ENCODE measurements at regions of chr6 and their contacts with region 1.

Region 1: GRCh38 chr6:45930420-45931040 is 85.1 kb downstream of the CLIC5 start:
- DNase-seq: peak; percentile 67
- ATAC-seq: peak; percentile 66
- H3K4me3 Mint-ChIP-seq: no peak overlapping the region
- H3K27ac Mint-ChIP-seq: no peak overlapping the region
- H3K4me1 Mint-ChIP-seq: peaks cover 22% of the 10 kb centered on the region
- H3K27me3 Mint-ChIP-seq: no peaks in the 10 kb centered on the region

Region 2: DNA sequence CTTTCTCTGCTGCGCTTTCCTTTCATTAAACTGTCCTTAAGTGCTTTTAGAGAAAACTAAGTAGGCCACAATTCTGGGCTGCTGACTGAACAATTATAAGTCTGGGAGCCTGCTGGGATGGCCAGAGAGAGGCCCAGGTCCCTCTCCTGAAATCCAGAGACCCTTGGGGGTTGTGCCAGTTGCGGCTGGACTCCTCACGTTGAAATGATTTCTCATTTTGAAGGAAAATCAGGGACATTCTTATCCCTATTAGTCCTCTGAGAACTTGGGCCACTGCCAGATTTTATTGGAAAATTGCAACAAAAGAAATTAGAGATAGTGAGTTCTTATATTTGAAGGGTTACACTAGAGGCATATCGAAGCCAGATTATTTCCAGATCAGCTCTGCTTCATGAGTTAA is 60.0 kb before region 1 on chr6:
- CTCF ChIA-PET with region 1: no interaction called
- DNase-seq: no peak
- ATAC-seq: no peak
- H3K4me3 Mint-ChIP-seq: no peak overlapping the region
- H3K27ac Mint-ChIP-seq: no peak overlapping the region
- H3K4me1 Mint-ChIP-seq: peaks cover 3% of the 10 kb centered on the region
- H3K27me3 Mint-ChIP-seq: peaks cover 41% of the 10 kb centered on the region

Region 3: DNA sequence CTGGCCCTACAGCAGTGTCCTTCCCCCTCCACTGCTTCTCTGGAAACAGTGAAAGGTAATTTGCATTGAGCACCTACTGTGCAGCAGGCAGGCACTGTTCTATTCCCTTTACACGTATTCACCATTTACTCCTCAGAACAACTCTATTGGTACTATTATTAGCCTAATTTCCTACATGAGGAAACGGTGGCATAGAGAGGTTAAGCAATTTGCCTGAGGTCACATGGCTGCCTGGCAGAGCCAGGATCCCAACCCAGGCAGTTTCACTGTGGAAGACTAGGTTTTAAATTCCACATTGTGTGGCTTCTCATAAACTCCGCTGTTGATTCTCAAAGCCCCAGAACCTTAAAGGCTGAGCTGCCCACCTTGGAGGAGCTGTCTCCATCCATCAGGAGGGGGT is 12.4 kb after region 1 on chr6:
- CTCF ChIA-PET with region 1: interaction called, 10 read pairs
- DNase-seq: no peak
- ATAC-seq: no peak
- H3K4me3 Mint-ChIP-seq: no peak overlapping the region
- H3K27ac Mint-ChIP-seq: no peak overlapping the region
- H3K4me1 Mint-ChIP-seq: peaks cover 10% of the 10 kb centered on the region
- H3K27me3 Mint-ChIP-seq: no peaks in the 10 kb centered on the region

Region 4: GRCh38 chr6:46011241-46012085 is 80.9 kb after region 1 on chr6:
- CTCF ChIA-PET with region 1: interaction called, 13 read pairs
- DNase-seq: peak; percentile 90
- ATAC-seq: peak; percentile 86
- H3K4me3 Mint-ChIP-seq: peak overlapping the region; percentile 67
- H3K27ac Mint-ChIP-seq: peak overlapping the region; percentile 93
- H3K4me1 Mint-ChIP-seq: peaks cover 57% of the 10 kb centered on the region
- H3K27me3 Mint-ChIP-seq: peaks cover 1% of the 10 kb centered on the region